Esophagus muscularis mucosa (tissue), 4 donors: ENCODE measurements at regions of chr21 and their contacts with region 1.

Region 1: GRCh38 chr21:31604591-31605190 is 54.8 kb upstream of the SOD1 start:
- DNase-seq: no peak
- H3K4me3 ChIP-seq: no peak overlapping the region
- H3K27ac ChIP-seq: no peak overlapping the region
- H3K4me1 ChIP-seq: no peaks in the 10 kb centered on the region
- H3K27me3 ChIP-seq: peaks cover 0 to 4% (median 0%) of the 10 kb centered on the region in 4 donors
- CTCF ChIP-seq: peak; percentile 76 to 83 (median 80)
- EP300 ChIP-seq: no peak
- POLR2A ChIP-seq: no peak

Region 2: GRCh38 chr21:31098576-31099005 is 506.1 kb before region 1 on chr21:
- intact Hi-C with region 1: loop called (anchors 10 kb)
- DNase-seq: peak; percentile 92
- H3K4me3 ChIP-seq: no peak overlapping the region
- H3K27ac ChIP-seq: no peak overlapping the region
- H3K4me1 ChIP-seq: no peaks in the 10 kb centered on the region
- H3K27me3 ChIP-seq: peaks cover 0 to 14% (median 0%) of the 10 kb centered on the region in 4 donors
- CTCF ChIP-seq: peak; percentile 64 to 87 (median 69)
- EP300 ChIP-seq: no peak
- POLR2A ChIP-seq: no peak

Region 3: DNA sequence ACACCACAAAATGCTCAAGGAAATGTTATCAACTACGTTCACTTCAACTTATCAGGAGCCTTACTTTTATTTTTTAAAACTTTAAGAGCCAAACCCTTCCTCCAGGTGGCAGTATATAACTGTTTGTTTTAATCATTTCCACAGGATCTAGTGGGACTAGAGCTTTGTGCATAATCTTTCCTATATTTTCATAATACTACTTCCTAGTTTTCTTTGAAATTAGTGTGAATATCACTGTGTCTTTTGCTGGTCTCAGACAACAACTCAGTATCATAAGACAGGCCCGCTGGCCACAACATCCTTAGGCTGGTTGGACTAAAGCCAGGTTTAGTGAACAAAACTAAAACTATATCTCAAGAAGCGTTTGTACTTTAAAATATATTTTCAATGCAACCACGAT is 406.1 kb before region 1 on chr21:
- intact Hi-C with region 1: loop called (anchors 5 kb)
- DNase-seq: no peak
- H3K4me3 ChIP-seq: no peak overlapping the region
- H3K27ac ChIP-seq: no peak overlapping the region
- H3K4me1 ChIP-seq: peaks cover 0 to 4% (median 0%) of the 10 kb centered on the region in 4 donors
- H3K27me3 ChIP-seq: peaks cover 0 to 19% (median 0%) of the 10 kb centered on the region in 4 donors
- CTCF ChIP-seq: peak; percentile 46 to 61 (median 56)
- EP300 ChIP-seq: no peak
- POLR2A ChIP-seq: no peak